ENCODE measurements at regions of chr1 and their contacts with region 1.

Region 1: GRCh38 chr1:18913065-18913835 is 10.9 kb upstream of the ALDH4A1 start:
- DNase-seq: peak; percentile 57 to 78 (median 65)
- H3K4me3 ChIP-seq: no peak overlapping the region
- H3K4me3 Mint-ChIP-seq: no peak overlapping the region
- H3K27ac ChIP-seq: no peak overlapping the region
- H3K27ac Mint-ChIP-seq: peak overlapping the region; percentile 66 to 93 (median 84)
- H3K4me1 ChIP-seq: no peaks in the 10 kb centered on the region
- H3K4me1 Mint-ChIP-seq: peaks cover 6 to 19% (median 9%) of the 10 kb centered on the region in 3 donors
- H3K27me3 ChIP-seq: no peaks in the 10 kb centered on the region
- H3K27me3 Mint-ChIP-seq: no peaks in the 10 kb centered on the region

Region 2: DNA sequence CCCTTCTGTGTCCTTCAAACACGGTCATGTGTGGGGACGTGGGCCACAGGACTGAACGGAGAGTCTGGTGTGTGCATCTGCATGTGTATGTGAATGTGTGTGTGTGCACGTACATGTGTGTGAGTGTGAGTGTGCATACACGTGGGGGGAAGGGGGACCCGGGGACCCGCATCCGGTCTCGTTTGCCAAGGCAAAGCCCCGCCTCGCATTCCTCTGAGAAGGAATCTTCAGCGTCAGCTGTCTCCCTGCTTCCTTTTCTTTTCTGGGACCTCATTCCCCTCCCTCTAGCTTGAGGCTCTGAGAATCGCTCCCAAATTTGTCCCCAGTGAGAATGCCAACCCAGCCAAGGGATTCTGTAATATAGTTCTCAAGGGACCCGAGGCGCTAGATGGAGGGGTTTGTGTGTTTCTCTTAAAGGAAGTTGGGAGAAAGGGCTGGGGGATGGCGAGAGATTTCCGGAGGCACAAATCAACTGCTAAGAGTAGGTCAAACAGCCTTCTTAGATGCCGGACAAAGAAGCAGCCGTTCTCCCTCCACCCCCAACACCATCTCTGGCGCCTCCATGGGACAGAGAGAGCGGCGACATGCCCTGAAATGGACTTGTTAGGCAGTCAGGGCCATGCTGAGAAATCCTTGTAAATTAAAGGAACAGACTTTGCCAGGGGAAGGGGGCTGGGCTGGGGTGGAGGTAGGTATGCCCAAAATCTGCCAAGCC is 36.6 kb after region 1 on chr1:
- CTCF ChIA-PET with region 1: interaction called, 36 read pairs
- POLR2A ChIA-PET with region 1: interaction called, 4 read pairs
- DNase-seq: peak in 1 of 5 donors; percentile 31
- H3K4me3 ChIP-seq: peak overlapping the region; percentile 57
- H3K4me3 Mint-ChIP-seq: peak overlapping the region; percentile 93 to 98 (median 95)
- H3K27ac ChIP-seq: peak overlapping the region; percentile 99
- H3K27ac Mint-ChIP-seq: peak overlapping the region; percentile 99 to 100 (median 100)
- H3K4me1 ChIP-seq: peaks cover 98% of the 10 kb centered on the region
- H3K4me1 Mint-ChIP-seq: peaks cover 95 to 98% (median 97%) of the 10 kb centered on the region in 3 donors
- H3K27me3 ChIP-seq: no peaks in the 10 kb centered on the region
- H3K27me3 Mint-ChIP-seq: peaks cover 0 to 3% of the 10 kb centered on the region in 2 donors

Region 3: DNA sequence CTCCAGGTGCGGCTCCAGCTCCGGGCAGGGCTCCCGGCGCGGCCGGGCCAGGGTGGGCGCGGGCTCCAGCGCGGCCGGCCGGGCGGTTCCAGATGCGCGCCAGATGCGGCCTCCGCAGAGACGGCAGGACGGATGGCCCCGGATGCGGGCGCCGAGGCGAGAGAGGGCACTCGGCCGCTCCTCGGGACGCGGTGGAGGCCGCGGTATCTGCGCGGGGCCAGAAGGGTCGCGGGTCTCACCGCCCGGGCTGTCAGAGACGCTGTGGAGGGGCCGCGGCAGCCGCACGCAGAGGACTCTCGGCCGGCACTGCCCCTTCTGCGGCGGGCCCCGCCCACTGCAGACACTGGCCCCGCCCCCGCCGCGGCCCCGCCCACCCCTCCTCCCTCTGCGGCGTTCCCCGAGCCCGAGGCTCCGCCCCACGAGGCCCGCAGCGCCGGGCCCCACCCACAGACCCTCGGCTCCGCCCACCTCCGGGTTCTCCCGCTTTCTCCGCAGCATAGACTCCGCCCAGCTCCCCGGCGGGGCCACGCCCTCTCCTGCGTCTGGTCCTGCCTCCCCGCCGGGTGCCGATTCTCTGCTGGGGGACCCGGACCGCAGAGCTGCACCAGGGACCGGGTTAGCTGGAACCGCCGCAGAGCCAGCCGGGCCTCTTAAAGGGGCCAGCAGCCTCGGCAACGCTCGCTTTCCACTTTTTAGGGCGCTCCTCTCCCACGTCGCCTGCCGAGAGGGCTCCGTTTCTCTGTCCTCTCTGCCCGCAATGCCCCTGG is 43.3 kb after region 1 on chr1 and contains the start of gene IFFO2:
- CTCF ChIA-PET with region 1: interaction called, 36 read pairs
- POLR2A ChIA-PET with region 1: interaction called, 7 read pairs
- DNase-seq: peak; percentile 97 to 100 (median 98)
- H3K4me3 ChIP-seq: peak within 1 kb of the TSS; percentile 69
- H3K4me3 Mint-ChIP-seq: peak within 1 kb of the TSS; percentile 93 to 98 (median 95)
- H3K27ac ChIP-seq: peak within 1 kb of the TSS; percentile 60
- H3K27ac Mint-ChIP-seq: peak within 1 kb of the TSS; percentile 95 to 100 (median 100)
- H3K4me1 ChIP-seq: peaks cover 51% of the 10 kb centered on the region
- H3K4me1 Mint-ChIP-seq: peaks cover 53 to 62% (median 54%) of the 10 kb centered on the region in 3 donors
- H3K27me3 ChIP-seq: no peaks in the 10 kb centered on the region
- H3K27me3 Mint-ChIP-seq: peaks cover 0 to 4% of the 10 kb centered on the region in 2 donors
- total RNA-seq, gene IFFO2: 33.1 to 37.7 TPM

Region 4: DNA sequence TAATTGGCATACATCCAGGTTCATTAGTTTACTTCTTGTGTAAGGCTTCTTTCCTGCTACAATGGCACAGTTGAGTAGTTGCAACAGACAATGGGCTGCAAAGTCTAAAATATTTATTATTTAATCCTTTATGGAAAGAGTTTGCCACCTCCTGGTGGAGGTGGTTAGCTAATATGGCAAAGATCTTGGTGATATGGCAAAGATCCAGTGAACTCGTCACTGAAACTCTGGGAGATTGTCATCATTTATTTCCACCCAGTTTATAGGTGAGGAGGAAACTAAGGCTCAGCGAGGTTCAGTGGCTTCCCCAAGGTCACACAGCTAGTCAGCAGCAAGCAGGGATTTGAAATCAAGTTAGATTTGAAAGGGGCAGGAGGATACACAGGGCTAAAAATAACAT is 59.3 kb after region 1 on chr1:
- CTCF ChIA-PET with region 1: interaction called, 87 read pairs
- POLR2A ChIA-PET with region 1: no interaction called
- DNase-seq: peak in 3 of 5 donors; percentile 46 to 52 (median 47)
- H3K4me3 ChIP-seq: no peak overlapping the region
- H3K4me3 Mint-ChIP-seq: no peak overlapping the region
- H3K27ac ChIP-seq: no peak overlapping the region
- H3K27ac Mint-ChIP-seq: no peak overlapping the region
- H3K4me1 ChIP-seq: no peaks in the 10 kb centered on the region
- H3K4me1 Mint-ChIP-seq: peaks cover 2 to 5% (median 2%) of the 10 kb centered on the region in 3 donors
- H3K27me3 ChIP-seq: no peaks in the 10 kb centered on the region
- H3K27me3 Mint-ChIP-seq: peaks cover 3 to 24% of the 10 kb centered on the region in 2 donors

Region 5: GRCh38 chr1:19074902-19075721 is 161.9 kb after region 1 on chr1:
- CTCF ChIA-PET with region 1: interaction called, 21 read pairs
- POLR2A ChIA-PET with region 1: no interaction called
- DNase-seq: peak in 1 of 5 donors; percentile 46
- H3K4me3 ChIP-seq: peak overlapping the region; percentile 22
- H3K4me3 Mint-ChIP-seq: peak overlapping the region in 6 of 7 donors; percentile 30 to 80 (median 66)
- H3K27ac ChIP-seq: no peak overlapping the region
- H3K27ac Mint-ChIP-seq: peak overlapping the region; percentile 7 to 85 (median 58)
- H3K4me1 ChIP-seq: peaks cover 47% of the 10 kb centered on the region
- H3K4me1 Mint-ChIP-seq: peaks cover 42 to 61% (median 49%) of the 10 kb centered on the region in 3 donors
- H3K27me3 ChIP-seq: no peaks in the 10 kb centered on the region
- H3K27me3 Mint-ChIP-seq: no peaks in the 10 kb centered on the region

Measured in CD8-positive, alpha-beta memory T cell (primary cell).